ENCODE measurements at regions of chr4 and their contacts with region 1.

Region 1: GRCh38 chr4:82900331-82901128 is at the start of gene THAP9:
- DNase-seq: peak; percentile 99
- H3K4me3 ChIP-seq: peak within 1 kb of the TSS; percentile 85
- H3K27ac ChIP-seq: peak within 1 kb of the TSS; percentile 87
- H3K4me1 ChIP-seq: peaks cover 42% of the 10 kb centered on the region
- CTCF ChIP-seq: no peak
- total RNA-seq, gene THAP9: 13.2 and 16.4 TPM in 2 replicates

Region 2: GRCh38 chr4:82957045-82957444 is 56.5 kb after region 1 on chr4:
- CTCF ChIA-PET with region 1: no interaction called
- POLR2A ChIA-PET with region 1: no interaction called
- intact Hi-C with region 1: loop called (anchors 5 kb)
- DNase-seq: no peak
- H3K4me3 ChIP-seq: no peak overlapping the region
- H3K27ac ChIP-seq: peak overlapping the region; percentile 17
- H3K4me1 ChIP-seq: peaks cover 21% of the 10 kb centered on the region
- CTCF ChIP-seq: no peak

Region 3: DNA sequence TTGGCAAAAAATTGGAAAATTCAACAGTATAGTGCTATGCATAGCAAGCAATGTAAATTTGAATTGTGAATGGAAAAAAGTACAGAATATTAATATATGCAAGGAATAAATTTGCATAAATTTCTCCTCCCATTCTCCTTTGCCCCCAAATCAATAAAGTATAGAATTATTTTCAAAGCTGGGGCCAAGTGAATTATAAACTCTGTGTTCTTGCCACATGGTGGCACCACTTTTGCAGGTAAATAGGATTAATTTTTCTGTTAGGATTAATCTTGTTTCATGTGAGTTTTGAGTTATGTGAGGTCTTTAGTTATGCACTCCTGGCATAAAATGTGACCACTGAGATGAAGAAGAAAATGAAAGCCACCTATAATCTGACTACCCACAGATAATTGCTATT is 154.4 kb after region 1 on chr4:
- CTCF ChIA-PET with region 1: no interaction called
- POLR2A ChIA-PET with region 1: no interaction called
- intact Hi-C with region 1: no loop called
- DNase-seq: peak; percentile 63
- H3K4me3 ChIP-seq: no peak overlapping the region
- H3K27ac ChIP-seq: no peak overlapping the region
- H3K4me1 ChIP-seq: no peaks in the 10 kb centered on the region
- CTCF ChIP-seq: peak; percentile 82

Measured in OCI-LY7 (cell line).